Aorta (tissue), 5 donors: ENCODE measurements at regions of chr11 and their contacts with region 1.

Region 1: GRCh38 chr11:74449369-74449931 is 17.9 kb downstream of the KCNE3 start:
- DNase-seq: no peak
- ATAC-seq: peak; percentile 86
- H3K4me3 ChIP-seq: no peak overlapping the region
- H3K27ac ChIP-seq: no peak overlapping the region
- H3K4me1 ChIP-seq: no peaks in the 10 kb centered on the region
- H3K27me3 ChIP-seq: no peaks in the 10 kb centered on the region

Region 2: DNA sequence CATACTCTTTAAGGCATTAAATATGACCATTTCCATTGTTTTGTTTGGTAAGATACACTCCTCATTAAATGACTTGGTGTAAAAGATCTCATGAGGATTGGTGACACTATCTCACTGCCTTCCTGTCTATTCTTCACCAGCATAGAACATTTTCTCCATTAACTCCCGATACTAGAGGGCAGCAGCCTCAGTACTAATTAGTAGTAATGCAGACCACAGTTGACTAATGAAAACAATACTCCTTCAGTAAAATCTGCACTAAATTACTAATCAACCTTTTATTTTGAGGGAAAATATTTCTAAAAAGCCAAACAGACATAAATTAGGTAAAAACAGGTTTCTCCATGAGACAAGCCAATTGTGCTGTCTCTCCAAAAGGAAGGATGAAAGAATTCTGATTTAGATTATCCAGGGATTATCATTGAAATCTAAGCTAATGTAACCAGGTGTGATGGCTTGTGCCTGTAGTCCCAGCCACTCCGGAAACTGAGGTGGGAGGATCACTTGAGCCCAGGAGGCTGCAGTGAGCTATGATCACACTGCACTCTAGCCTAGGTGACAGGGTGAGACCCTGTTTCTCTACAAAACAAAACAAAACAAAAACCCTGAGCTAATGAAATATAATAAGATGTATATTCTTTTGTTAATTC is 60.6 kb before region 1 on chr11:
- intact Hi-C with region 1: loop called (anchors 2 to 5 kb)
- DNase-seq: no peak
- ATAC-seq: peak; percentile 77
- H3K4me3 ChIP-seq: no peak overlapping the region
- H3K27ac ChIP-seq: no peak overlapping the region
- H3K4me1 ChIP-seq: peaks cover 2% of the 10 kb centered on the region in 2 donors
- H3K27me3 ChIP-seq: no peaks in the 10 kb centered on the region

Region 3: GRCh38 chr11:74570266-74571061 is 121.0 kb after region 1 on chr11:
- intact Hi-C with region 1: loop called in 1 of 2 experiments (anchors 5 kb)
- DNase-seq: no peak
- ATAC-seq: no peak
- H3K4me3 ChIP-seq: no peak overlapping the region
- H3K27ac ChIP-seq: no peak overlapping the region
- H3K4me1 ChIP-seq: no peaks in the 10 kb centered on the region
- H3K27me3 ChIP-seq: no peaks in the 10 kb centered on the region

Region 4: DNA sequence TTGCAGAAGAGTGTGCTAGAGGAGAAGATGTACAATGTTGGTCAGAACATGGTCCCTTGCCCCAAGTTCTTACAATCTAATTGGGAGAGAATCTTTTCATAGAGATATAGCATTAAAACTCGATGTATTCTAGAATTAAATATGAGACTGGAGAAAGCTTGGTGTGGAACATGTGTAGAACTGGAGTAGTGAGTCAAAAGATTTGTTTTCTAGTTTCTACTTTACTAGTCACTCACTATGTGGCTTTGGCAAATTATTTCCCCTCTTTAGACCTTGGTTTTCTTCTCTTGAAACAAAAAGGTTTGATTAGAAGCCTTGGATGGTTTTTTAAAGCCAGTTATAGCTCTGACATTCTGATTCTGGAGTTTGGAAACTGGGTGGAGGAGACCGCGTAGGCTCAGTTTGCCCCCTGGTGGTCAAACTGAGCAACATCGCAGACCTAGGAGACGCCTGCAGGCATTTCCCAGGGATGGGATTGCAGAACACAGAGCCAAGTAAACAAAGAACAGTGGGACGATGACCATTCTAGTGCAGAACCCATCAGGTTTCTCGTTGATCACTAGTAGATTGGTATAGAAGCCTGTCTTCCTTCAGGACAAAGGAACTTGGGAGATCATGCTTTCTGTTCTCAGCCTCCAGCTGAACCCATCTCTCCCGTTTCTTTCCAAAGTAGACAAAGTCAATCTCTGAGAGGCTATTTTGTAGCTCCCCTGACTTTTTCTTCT is 290.3 kb after region 1 on chr11:
- intact Hi-C with region 1: loop called (anchors 2 to 5 kb)
- DNase-seq: peak in 1 of 2 donors; percentile 67
- ATAC-seq: peak; percentile 77
- H3K4me3 ChIP-seq: no peak overlapping the region
- H3K27ac ChIP-seq: no peak overlapping the region
- H3K4me1 ChIP-seq: no peaks in the 10 kb centered on the region
- H3K27me3 ChIP-seq: no peaks in the 10 kb centered on the region